GM10248 (cell line): ENCODE measurements at regions of chr5 and their contacts with region 1.

Region 1: GRCh38 chr5:64659289-64659688 is 31.0 kb upstream of the SHISAL2B start:
- DNase-seq: no peak
- CTCF ChIP-seq: no peak

Region 2: DNA sequence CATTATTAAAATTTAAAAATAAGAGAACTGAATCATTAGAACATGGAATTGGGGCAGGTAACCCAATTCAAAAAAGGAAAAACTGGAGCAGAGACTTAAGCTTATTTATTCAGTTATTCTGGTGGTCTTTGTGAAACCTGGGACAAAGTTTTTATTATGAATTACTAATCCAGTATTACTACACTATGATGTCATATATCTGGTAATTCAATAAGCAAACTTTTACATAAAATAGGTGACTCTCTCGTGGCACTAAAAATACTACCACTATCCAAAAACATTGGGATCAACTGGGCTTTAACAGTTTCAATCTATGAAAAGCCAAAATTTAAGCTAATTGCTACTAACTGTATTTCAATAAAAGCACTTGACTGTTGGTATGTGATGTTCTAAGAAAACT is 288.6 kb before region 1 on chr5:
- CTCF ChIA-PET with region 1: no interaction called
- POLR2A ChIA-PET with region 1: no interaction called
- DNase-seq: no peak
- CTCF ChIP-seq: no peak

Region 3: GRCh38 chr5:64518809-64519208 is 140.5 kb before region 1 on chr5:
- CTCF ChIA-PET with region 1: no interaction called
- POLR2A ChIA-PET with region 1: no interaction called
- DNase-seq: no peak
- CTCF ChIP-seq: no peak

Region 4: GRCh38 chr5:64670277-64670676 is 11.0 kb after region 1 on chr5:
- CTCF ChIA-PET with region 1: interaction called, 12 read pairs
- POLR2A ChIA-PET with region 1: no interaction called
- DNase-seq: no peak
- CTCF ChIP-seq: no peak

Region 5: DNA sequence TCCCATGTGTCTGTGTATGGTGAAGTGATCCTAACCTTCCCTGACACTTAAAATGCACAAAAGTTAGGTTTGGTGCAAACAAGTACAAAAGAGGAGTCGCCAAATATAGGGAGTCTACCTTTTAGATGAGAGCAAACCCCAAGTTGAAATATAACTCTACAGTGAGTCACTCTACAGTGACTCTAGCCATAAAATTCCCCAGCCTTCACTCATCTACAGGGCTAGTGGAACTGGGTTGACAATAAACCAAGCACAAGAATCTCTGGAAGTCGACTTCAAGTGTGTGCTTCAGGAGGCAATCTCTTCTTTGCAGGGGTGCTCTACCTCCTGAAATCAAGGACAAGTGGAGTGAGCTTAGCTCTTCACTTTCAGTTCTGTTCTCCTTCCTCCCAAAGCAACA is 34.3 kb after region 1 on chr5:
- CTCF ChIA-PET with region 1: no interaction called
- POLR2A ChIA-PET with region 1: no interaction called
- DNase-seq: no peak
- CTCF ChIP-seq: no peak